GM13977 (cell line): ENCODE measurements at regions of chr10 and their contacts with region 1.

Region 1: GRCh38 chr10:3239066-3239919 is 66.7 kb upstream of the PITRM1 start:
- DNase-seq: peak; percentile 74
- CTCF ChIP-seq: peak; percentile 93

Region 2: GRCh38 chr10:2076528-2076927 is 1162.8 kb before region 1 on chr10:
- in situ Hi-C with region 1: no loop called
- DNase-seq: no peak
- CTCF ChIP-seq: no peak

Region 3: GRCh38 chr10:3151889-3152565 is 87.3 kb before region 1 on chr10:
- in situ Hi-C with region 1: no loop called
- DNase-seq: no peak
- CTCF ChIP-seq: no peak

Region 4: DNA sequence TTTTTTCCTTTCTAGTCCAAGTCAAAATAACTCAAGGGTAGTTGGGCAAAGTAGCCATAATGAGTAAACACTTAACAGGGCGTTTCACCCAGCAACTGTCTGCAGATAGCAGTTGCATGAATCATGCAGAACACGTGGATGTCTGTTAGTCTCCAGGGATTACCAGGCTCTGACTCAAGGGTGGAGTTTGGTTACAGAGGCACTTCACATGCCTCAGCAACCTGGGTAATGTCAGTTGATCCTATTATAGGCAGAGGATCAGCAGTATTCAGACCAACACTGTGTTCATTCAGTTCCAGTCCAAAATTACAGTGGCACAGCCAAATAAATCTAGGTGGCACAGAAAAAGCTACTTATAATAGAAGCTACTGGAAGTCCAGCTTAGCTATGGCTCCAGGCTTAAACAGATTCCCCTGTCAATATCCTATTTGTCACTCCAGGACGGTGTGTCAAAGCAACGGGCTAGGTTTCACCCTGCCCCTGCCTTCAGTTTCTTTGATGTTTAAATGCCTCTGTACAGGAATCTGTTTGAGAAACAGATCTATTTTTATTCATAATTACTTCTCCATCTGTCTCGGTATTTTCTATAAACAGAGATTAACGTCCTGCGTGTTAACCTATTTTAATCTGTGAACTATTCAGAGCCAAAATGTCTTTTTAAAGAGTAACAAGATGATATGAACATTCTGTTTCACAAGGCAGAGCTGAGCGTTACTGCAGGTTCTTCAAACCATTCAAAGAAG is 1424.0 kb after region 1 on chr10:
- in situ Hi-C with region 1: loop called (anchors 25 kb)
- DNase-seq: no peak
- CTCF ChIP-seq: no peak